ENCODE measurements at regions of chr12 and their contacts with region 1.

Region 1: GRCh38 chr12:68317047-68317667 is 15.0 kb downstream of the MDM1 start:
- DNase-seq: peak; percentile 84
- H3K4me3 Mint-ChIP-seq: no peak overlapping the region
- H3K27ac Mint-ChIP-seq: no peak overlapping the region
- H3K4me1 Mint-ChIP-seq: peaks cover 4% of the 10 kb centered on the region
- H3K27me3 Mint-ChIP-seq: no peaks in the 10 kb centered on the region

Region 2: DNA sequence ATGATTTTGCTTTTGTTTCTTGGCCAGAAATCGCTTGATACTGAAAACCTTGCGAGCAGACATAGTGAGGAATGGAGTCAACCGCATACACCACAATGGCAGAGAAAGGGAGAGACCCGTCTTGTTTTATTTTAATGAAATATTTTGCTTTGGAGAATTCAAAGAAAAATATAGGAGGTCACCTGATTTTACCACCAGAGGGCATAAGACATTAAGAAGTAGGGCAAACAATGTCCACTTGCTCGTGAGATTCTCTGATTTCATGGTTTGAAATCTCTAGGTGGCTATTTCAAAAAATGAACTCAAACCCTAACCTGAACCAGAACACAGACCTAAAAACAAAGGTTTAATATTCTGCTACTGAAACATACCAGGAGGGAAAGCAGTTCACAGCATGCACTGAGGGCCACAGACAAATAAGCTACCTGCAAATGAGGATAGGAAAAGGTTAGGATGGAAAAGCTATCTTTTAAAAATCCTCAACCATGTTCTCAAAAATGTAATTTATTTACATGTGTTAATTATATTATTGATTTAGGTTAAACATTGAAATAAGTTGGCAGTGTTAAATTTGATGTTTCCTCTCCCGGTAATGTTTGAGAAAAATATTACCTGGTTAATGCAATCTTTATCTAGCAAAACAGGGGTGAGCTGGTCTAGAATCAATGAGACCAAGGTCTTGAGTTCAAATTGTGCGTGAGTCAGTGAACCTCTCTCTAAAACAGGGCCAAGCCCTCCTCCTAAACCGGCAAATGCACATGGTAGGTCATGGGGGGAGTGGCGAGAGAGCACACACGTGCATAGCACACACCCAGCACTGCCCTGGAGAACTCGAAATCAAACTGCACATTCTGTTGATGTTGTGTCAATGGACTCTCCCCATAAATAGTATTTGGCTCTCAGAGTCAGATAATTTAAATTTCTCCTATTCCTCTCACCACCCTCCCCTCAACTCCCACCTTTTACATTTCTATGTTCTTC is 315.4 kb before region 1 on chr12:
- intact Hi-C with region 1: loop called (anchors 2 kb)
- DNase-seq: no peak
- H3K4me3 Mint-ChIP-seq: no peak overlapping the region
- H3K27ac Mint-ChIP-seq: no peak overlapping the region
- H3K4me1 Mint-ChIP-seq: peaks cover 7% of the 10 kb centered on the region
- H3K27me3 Mint-ChIP-seq: no peaks in the 10 kb centered on the region